Motor neuron (in vitro differentiated cells): ENCODE measurements at regions of chr2 and their contacts with region 1.

Region 1: GRCh38 chr2:158923180-158923594 is 45.3 kb upstream of the TANC1 start:
- ATAC-seq: peak in 4 of 8 experiments; percentile 39 to 57 (median 48)
- H3K4me3 ChIP-seq: no peak overlapping the region
- H3K27ac ChIP-seq: no peak overlapping the region
- H3K4me1 ChIP-seq: no peaks in the 10 kb centered on the region

Region 2: DNA sequence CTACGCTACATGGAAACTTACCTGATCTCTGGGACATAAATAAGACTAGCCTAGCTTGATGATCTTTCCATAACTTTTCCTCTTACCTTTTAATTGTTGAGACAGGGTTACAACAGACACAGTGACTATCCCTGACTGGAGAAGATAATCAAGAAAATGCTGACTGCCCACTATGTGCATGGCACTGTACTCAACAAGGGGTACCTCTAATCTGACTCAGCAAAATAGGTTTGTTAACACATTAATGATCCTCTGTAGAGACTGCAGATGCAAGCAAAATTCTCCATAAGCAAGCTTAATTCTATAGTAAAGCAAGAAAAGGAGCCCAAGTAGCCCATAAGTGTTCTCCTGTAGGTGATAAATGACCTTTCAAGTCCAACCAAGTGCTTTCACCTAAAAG is 1320.0 kb before region 1 on chr2:
- in situ Hi-C with region 1: no loop called
- ATAC-seq: no peak
- H3K4me3 ChIP-seq: no peak overlapping the region
- H3K27ac ChIP-seq: no peak overlapping the region
- H3K4me1 ChIP-seq: no peaks in the 10 kb centered on the region

Region 3: GRCh38 chr2:159118115-159118858 is 195.1 kb after region 1 on chr2:
- in situ Hi-C with region 1: loop called in 3 of 9 experiments (anchors 25 kb)
- ATAC-seq: peak; percentile 88 to 99 (median 96)
- H3K4me3 ChIP-seq: no peak overlapping the region
- H3K27ac ChIP-seq: no peak overlapping the region
- H3K4me1 ChIP-seq: peaks cover 11 to 12% of the 10 kb centered on the region in 2 donors

Region 4: GRCh38 chr2:159489476-159489875 is 566.3 kb after region 1 on chr2:
- in situ Hi-C with region 1: no loop called
- ATAC-seq: no peak
- H3K4me3 ChIP-seq: no peak overlapping the region
- H3K27ac ChIP-seq: no peak overlapping the region
- H3K4me1 ChIP-seq: no peaks in the 10 kb centered on the region